ENCODE measurements at regions of chr7 and their contacts with region 1.

Region 1: GRCh38 chr7:138738551-138739335 is 37.6 kb upstream of the SVOPL start:
- DNase-seq: peak; percentile 71 to 91 (median 83)
- ATAC-seq: peak; percentile 99
- H3K4me3 ChIP-seq: no peak overlapping the region
- H3K27ac ChIP-seq: no peak overlapping the region
- H3K4me1 ChIP-seq: peaks cover 0 to 5% of the 10 kb centered on the region in 2 donors
- H3K27me3 ChIP-seq: no peaks in the 10 kb centered on the region
- CTCF ChIP-seq: peak; percentile 81 to 83

Region 2: DNA sequence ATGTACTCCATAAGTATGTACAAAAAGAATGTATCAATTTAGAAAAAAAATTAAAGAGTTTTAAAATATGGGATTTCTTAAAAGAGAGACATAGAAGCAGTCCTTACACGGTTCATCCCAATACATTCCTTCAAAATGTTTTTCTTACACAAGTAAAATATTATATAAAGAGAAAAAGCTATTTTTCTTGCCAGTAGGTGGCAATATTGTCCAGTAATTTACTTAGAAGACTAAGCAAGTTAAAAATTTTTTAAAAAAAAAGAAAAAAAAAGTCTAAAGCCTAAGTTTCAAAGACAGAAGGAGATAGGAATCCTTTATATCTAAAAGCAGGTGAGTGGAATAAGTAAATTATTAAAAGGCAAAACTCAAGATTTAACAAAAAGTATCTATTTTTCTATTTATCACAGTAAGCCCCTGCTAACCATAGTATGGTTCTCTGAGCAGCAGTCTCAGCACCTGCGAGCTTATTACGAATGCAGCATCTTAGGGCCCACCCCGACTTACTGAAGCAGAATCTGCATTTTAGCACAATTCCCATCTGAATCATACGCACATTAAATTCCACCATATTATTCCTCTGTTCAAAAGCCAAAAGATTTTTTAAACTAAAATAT is 1132.6 kb before region 1 on chr7:
- intact Hi-C with region 1: loop called in 1 of 2 experiments (anchors 10 kb)
- DNase-seq: peak in 1 of 4 donors; percentile 51
- ATAC-seq: no peak
- H3K4me3 ChIP-seq: no peak overlapping the region
- H3K27ac ChIP-seq: no peak overlapping the region
- H3K4me1 ChIP-seq: no peaks in the 10 kb centered on the region
- H3K27me3 ChIP-seq: peaks cover 0 to 11% of the 10 kb centered on the region in 2 donors
- CTCF ChIP-seq: peak in 1 of 2 donors; percentile 36

Region 3: GRCh38 chr7:138161600-138162081 is 577.1 kb before region 1 on chr7:
- intact Hi-C with region 1: loop called in 1 of 2 experiments (anchors 5 kb)
- DNase-seq: peak in 3 of 4 donors; percentile 69 to 91 (median 81)
- ATAC-seq: peak; percentile 100
- H3K4me3 ChIP-seq: no peak overlapping the region
- H3K27ac ChIP-seq: no peak overlapping the region
- H3K4me1 ChIP-seq: no peaks in the 10 kb centered on the region
- H3K27me3 ChIP-seq: no peaks in the 10 kb centered on the region
- CTCF ChIP-seq: peak; percentile 55 to 58

Measured in left lung (tissue), 14 donors.